B cell (primary cell): ENCODE measurements at regions of chr6 and their contacts with region 1.

Region 1: DNA sequence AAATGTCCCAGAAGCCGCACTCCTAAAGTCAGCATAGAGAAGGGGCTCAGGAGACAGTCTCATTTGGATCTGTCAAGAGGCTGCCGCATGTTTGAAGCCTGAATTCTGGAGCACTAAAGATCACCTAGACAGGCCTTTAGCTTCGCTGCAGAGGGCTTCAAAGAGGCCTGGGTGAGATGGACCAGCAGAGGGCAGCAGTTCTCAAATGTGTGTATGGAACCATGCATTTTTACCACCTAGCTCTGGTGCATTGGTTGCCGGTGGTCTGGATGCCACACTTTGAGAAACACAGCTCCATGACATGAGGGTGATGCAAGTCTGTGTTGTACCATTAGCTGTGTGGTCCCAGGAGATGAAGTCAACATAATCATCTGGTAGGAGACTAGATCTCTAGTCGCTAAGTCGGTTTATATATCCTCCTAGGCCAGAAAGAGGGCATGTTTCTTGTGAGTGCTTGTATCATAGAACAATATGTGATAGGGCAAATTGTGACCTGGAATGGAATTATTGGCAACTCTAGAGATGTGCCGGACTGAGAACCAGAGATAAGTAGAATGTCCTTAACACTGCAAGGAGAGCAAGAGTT is 64.8 kb downstream of the KIAA0319 start:
- DNase-seq: peak; percentile 81
- ATAC-seq: peak; percentile 87
- H3K4me3 ChIP-seq: no peak overlapping the region
- H3K4me3 Mint-ChIP-seq: no peak overlapping the region
- H3K27ac ChIP-seq: no peak overlapping the region
- H3K27ac Mint-ChIP-seq: no peak overlapping the region
- H3K4me1 ChIP-seq: peaks cover 3 to 5% of the 10 kb centered on the region in 2 donors
- H3K4me1 Mint-ChIP-seq: peaks cover 4% of the 10 kb centered on the region
- H3K27me3 ChIP-seq: no peaks in the 10 kb centered on the region
- H3K27me3 Mint-ChIP-seq: no peaks in the 10 kb centered on the region
- CTCF ChIP-seq: peak; percentile 86

Region 2: DNA sequence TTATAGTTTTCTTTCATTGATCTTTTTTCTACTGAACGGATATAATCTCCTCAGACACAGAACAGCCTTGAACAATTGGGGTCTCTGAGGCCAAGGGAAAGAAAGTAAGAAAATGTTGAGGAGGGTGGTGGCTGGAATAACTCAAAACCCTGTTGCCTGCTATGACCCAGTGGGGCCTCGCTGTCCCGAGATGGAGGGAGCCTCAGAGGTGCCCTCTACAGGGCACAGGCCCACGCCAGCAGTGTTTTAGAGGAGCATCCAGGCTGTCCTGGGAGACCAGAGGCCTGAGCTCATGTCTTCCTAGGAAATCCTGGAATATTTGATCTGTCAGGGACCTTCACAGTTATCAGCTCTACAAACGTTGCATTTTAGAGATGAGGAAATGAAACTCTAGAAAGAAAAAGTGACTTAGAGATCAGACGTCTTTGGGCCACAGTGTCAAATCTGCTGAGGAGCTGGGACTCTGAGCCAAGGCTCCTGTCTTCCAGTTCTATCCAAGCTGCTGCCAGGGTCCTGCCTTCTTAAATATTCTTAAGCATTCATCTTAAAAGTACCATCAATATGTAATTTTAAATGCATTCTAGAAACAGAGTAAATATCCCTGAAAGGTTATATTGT is 60.1 kb before region 1 on chr6:
- CTCF ChIA-PET with region 1: interaction called, 60 read pairs
- POLR2A ChIA-PET with region 1: no interaction called
- intact Hi-C with region 1: loop called (anchors 2 kb)
- DNase-seq: peak; percentile 60
- ATAC-seq: peak; percentile 48
- H3K4me3 ChIP-seq: no peak overlapping the region
- H3K4me3 Mint-ChIP-seq: peak overlapping the region; percentile 33
- H3K27ac ChIP-seq: peak overlapping the region; percentile 22 to 38
- H3K27ac Mint-ChIP-seq: peak overlapping the region; percentile 82
- H3K4me1 ChIP-seq: peaks cover 49 to 50% of the 10 kb centered on the region in 2 donors
- H3K4me1 Mint-ChIP-seq: peaks cover 62% of the 10 kb centered on the region
- H3K27me3 ChIP-seq: no peaks in the 10 kb centered on the region
- H3K27me3 Mint-ChIP-seq: no peaks in the 10 kb centered on the region
- CTCF ChIP-seq: peak; percentile 40

Region 3: GRCh38 chr6:24646782-24647181 is 65.6 kb after region 1 on chr6:
- CTCF ChIA-PET with region 1: interaction called, 9 read pairs
- POLR2A ChIA-PET with region 1: no interaction called
- intact Hi-C with region 1: loop called (anchors 5 kb)
- DNase-seq: no peak
- ATAC-seq: no peak
- H3K4me3 ChIP-seq: no peak overlapping the region
- H3K4me3 Mint-ChIP-seq: peak overlapping the region; percentile 95
- H3K27ac ChIP-seq: peak overlapping the region in 1 of 2 donors; percentile 75
- H3K27ac Mint-ChIP-seq: peak overlapping the region; percentile 98
- H3K4me1 ChIP-seq: peaks cover 10 to 15% of the 10 kb centered on the region in 2 donors
- H3K4me1 Mint-ChIP-seq: peaks cover 27% of the 10 kb centered on the region
- H3K27me3 ChIP-seq: no peaks in the 10 kb centered on the region
- H3K27me3 Mint-ChIP-seq: no peaks in the 10 kb centered on the region
- CTCF ChIP-seq: no peak

Region 4: GRCh38 chr6:24699521-24700359 is 118.6 kb after region 1 on chr6:
- CTCF ChIA-PET with region 1: interaction called, 156 read pairs
- POLR2A ChIA-PET with region 1: no interaction called
- intact Hi-C with region 1: loop called (anchors 1 kb)
- DNase-seq: no peak
- ATAC-seq: no peak
- H3K4me3 ChIP-seq: no peak overlapping the region
- H3K4me3 Mint-ChIP-seq: no peak overlapping the region
- H3K27ac ChIP-seq: peak overlapping the region in 1 of 2 donors; percentile 56
- H3K27ac Mint-ChIP-seq: peak overlapping the region; percentile 53
- H3K4me1 ChIP-seq: no peaks in the 10 kb centered on the region
- H3K4me1 Mint-ChIP-seq: peaks cover 25% of the 10 kb centered on the region
- H3K27me3 ChIP-seq: no peaks in the 10 kb centered on the region
- H3K27me3 Mint-ChIP-seq: no peaks in the 10 kb centered on the region
- CTCF ChIP-seq: no peak

Region 5: GRCh38 chr6:24766680-24767462 is 185.7 kb after region 1 on chr6:
- CTCF ChIA-PET with region 1: interaction called, 68 read pairs
- POLR2A ChIA-PET with region 1: no interaction called
- intact Hi-C with region 1: no loop called
- DNase-seq: peak; percentile 61
- ATAC-seq: peak; percentile 41
- H3K4me3 ChIP-seq: no peak overlapping the region
- H3K4me3 Mint-ChIP-seq: no peak overlapping the region
- H3K27ac ChIP-seq: no peak overlapping the region
- H3K27ac Mint-ChIP-seq: no peak overlapping the region
- H3K4me1 ChIP-seq: no peaks in the 10 kb centered on the region
- H3K4me1 Mint-ChIP-seq: peaks cover 1% of the 10 kb centered on the region
- H3K27me3 ChIP-seq: no peaks in the 10 kb centered on the region
- H3K27me3 Mint-ChIP-seq: no peaks in the 10 kb centered on the region
- CTCF ChIP-seq: peak; percentile 73